ENCODE measurements at regions of chr17 and their contacts with region 1.

Region 1: DNA sequence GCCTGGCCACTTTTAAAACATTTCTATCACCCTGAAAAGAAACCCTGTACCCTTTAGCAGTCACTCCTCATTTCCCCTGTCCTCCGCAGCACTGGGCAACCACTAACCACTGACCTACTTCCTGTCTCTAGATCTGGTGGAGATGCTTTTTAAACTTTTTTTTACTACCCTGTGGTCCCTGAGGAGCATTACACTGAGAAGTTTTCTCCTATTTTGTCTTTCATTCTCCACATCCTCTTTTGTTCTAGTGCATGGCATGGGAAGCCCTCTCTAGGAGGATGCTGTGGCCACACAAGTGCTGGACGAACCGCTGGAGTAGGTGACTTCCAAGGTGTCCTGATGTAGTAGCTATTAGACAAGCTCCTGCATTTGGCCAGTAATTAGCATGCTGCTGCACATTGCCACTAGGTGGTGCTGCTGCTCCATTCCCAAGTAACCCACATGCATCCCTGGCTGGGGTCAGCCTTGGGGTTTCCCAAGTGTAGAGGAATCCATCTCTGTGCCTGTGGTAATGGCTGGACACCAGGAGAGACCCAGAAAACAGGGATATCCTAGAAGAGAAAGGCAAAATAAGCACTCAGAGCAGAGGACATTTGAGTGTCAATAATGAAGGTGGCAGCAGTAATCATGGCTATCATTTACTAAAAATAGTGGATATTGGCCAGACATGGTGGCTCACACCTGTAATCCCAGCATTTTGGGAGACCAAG is 143.8 kb upstream of the CRHR1 start:
- DNase-seq: peak; percentile 82
- H3K4me3 Mint-ChIP-seq: no peak overlapping the region
- H3K27ac Mint-ChIP-seq: peak overlapping the region; percentile 65
- H3K4me1 Mint-ChIP-seq: peaks cover 8% of the 10 kb centered on the region
- H3K27me3 Mint-ChIP-seq: no peaks in the 10 kb centered on the region

Region 2: GRCh38 chr17:45828628-45829027 is 188.3 kb after region 1 on chr17:
- CTCF ChIA-PET with region 1: interaction called, 20 read pairs
- DNase-seq: no peak
- H3K4me3 Mint-ChIP-seq: no peak overlapping the region
- H3K27ac Mint-ChIP-seq: peak overlapping the region; percentile 58
- H3K4me1 Mint-ChIP-seq: peaks cover 7% of the 10 kb centered on the region
- H3K27me3 Mint-ChIP-seq: peaks cover 40% of the 10 kb centered on the region

Region 3: DNA sequence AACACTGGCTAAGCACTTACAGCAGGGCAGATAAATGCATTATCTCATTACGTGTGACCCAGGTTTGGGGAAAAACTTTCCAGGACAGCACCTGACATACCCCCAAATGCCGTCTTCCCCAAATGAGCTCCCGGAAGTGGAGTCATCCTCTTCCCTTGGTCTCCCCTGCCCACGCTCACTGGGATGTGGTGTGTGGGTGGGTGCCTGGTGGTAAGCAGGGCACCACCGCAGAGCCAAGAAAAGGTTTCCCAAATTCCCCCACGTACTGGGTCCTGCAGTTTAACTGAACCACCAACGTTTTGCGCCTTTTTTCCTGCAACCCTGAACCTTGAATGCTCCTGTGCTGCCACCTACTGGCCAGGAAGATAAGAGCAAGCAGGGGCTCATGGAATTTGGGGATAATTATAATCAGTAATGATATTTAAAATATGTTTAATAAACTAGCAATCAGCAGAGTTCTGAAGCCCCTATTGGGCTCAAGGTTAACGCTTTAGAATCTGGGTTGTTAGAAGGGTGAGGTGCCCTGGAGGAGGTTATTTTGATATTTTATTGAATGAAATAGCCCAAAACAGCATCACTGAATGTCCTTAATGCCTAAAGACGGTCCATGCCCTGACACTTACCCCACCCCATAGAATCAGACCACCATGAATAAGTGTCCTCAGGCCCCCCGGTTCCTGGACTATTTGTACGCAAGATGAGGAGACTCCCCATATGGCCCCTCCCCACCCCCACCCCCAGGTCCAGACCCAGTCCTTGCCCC is 212.4 kb after region 1 on chr17:
- CTCF ChIA-PET with region 1: interaction called, 13 read pairs
- DNase-seq: peak; percentile 70
- H3K4me3 Mint-ChIP-seq: no peak overlapping the region
- H3K27ac Mint-ChIP-seq: no peak overlapping the region
- H3K4me1 Mint-ChIP-seq: no peaks in the 10 kb centered on the region
- H3K27me3 Mint-ChIP-seq: peaks cover 43% of the 10 kb centered on the region